PC-9 (cell line): ENCODE measurements at regions of chr10 and their contacts with region 1.

Region 1: GRCh38 chr10:31083765-31084184 is 52.1 kb upstream of the ZNF438 start:
- DNase-seq: peak in 1 of 2 experiments; percentile 44
- H3K4me3 ChIP-seq: no peak overlapping the region
- H3K27ac ChIP-seq: no peak overlapping the region
- H3K4me1 ChIP-seq: no peaks in the 10 kb centered on the region
- H3K27me3 ChIP-seq: no peaks in the 10 kb centered on the region
- CTCF ChIP-seq: peak; percentile 59

Region 2: GRCh38 chr10:31136930-31137885 is 53.4 kb after region 1 on chr10:
- CTCF ChIA-PET with region 1: no interaction called
- POLR2A ChIA-PET with region 1: no interaction called
- intact Hi-C with region 1: no loop called
- DNase-seq: no peak
- H3K4me3 ChIP-seq: no peak overlapping the region
- H3K27ac ChIP-seq: no peak overlapping the region
- H3K4me1 ChIP-seq: peaks cover 24% of the 10 kb centered on the region
- H3K27me3 ChIP-seq: no peaks in the 10 kb centered on the region
- CTCF ChIP-seq: no peak

Region 3: GRCh38 chr10:31318854-31319601 is 235.3 kb after region 1 on chr10 and contains the start of gene ZEB1:
- CTCF ChIA-PET with region 1: no interaction called
- POLR2A ChIA-PET with region 1: interaction called, 14 read pairs
- intact Hi-C with region 1: no loop called
- DNase-seq: peak; percentile 66 to 77
- H3K4me3 ChIP-seq: peak within 1 kb of the TSS; percentile 84
- H3K27ac ChIP-seq: peak within 1 kb of the TSS; percentile 65
- H3K4me1 ChIP-seq: no peaks in the 10 kb centered on the region; the same call in 1 of the 2 replicates
- H3K27me3 ChIP-seq: 0 out of 2 replicates have a peak, but pooled peaks cover 4% of the 10 kb centered on the region
- CTCF ChIP-seq: no peak
- total RNA-seq, gene ZEB1: 1.0 and 1.4 TPM in 2 replicates